A673 (cell line): ENCODE measurements at regions of chr7 and their contacts with region 1.

Region 1: DNA sequence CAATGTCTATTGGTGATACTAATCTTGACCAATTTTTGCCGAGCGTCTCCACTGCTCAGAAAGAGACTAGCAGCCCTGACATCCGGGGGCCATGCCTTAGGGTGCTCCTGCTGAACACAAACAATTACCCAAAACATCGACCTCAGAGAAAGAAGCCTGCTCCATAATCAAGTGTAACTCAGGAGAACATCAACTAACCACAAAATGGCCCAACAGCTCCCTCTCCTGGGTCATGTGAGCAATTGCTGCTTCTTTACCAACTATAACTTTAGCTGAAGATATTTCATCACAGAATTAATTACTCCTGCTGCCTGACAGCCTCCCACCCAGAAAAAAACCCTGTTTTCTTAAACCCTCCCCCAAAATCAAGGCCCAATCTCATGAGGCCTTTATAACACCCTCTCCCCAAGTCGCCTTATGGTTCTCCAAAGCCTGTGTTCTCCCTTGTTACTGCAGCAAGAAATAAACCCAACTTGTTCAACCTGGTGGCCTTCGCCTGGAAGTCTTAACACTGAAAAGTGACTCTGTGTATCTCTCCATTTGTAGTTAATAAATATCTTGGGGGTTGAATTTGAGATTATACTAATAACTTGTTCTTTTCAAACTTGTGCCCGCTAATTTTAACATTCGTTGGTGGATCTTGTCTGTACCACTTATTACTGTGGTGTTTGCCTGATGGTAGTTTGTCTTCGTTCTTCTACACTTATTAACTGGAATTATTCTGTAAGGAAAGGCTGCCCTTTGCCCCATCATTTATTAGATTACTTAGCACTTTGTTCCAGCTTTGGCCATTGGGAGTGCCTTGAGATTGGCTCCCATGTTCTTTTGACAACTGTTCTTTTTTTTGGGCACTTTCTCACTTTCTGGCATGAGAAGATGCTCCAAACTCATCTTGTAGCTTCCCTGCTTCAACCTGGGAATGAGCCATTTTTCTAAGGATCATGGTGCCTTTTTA is 21.2 kb upstream of the RAMP3 start:
- DNase-seq: peak; percentile 86
- H3K4me3 ChIP-seq: no peak overlapping the region
- H3K27ac ChIP-seq: no peak overlapping the region
- H3K4me1 ChIP-seq: no peaks in the 10 kb centered on the region
- H3K27me3 ChIP-seq: no peaks in the 10 kb centered on the region
- CTCF ChIP-seq: peak; percentile 90

Region 2: DNA sequence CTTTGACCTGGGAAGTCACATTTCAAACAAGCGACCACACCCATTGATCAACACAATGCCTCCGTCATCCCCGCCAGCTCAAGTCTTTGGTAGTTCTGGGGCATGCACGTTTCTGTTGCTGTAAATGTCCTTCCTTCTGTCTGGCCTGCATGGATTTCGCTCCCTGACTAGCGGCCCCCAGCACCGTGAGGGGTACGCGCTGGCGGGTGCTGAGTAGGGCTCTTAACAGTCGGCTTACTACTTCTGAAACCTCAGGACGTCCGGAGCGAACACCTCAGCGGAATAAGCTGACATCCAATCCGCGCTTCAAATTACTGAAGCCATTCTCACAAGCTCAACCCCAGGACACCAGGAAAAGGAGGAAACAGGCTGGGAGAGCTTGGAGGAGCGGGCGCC is 646.4 kb before region 1 on chr7:
- CTCF ChIA-PET with region 1: no interaction called
- POLR2A ChIA-PET with region 1: no interaction called
- intact Hi-C with region 1: loop called (anchors 10 kb)
- DNase-seq: no peak
- H3K4me3 ChIP-seq: peak overlapping the region; percentile 81
- H3K27ac ChIP-seq: peak overlapping the region; percentile 99
- H3K4me1 ChIP-seq: no peaks in the 10 kb centered on the region
- H3K27me3 ChIP-seq: no peaks in the 10 kb centered on the region
- CTCF ChIP-seq: no peak

Region 3: GRCh38 chr7:44713680-44714335 is 422.6 kb before region 1 on chr7:
- CTCF ChIA-PET with region 1: interaction called, 11 read pairs
- POLR2A ChIA-PET with region 1: no interaction called
- intact Hi-C with region 1: no loop called
- DNase-seq: no peak
- H3K4me3 ChIP-seq: no peak overlapping the region
- H3K27ac ChIP-seq: no peak overlapping the region
- H3K4me1 ChIP-seq: no peaks in the 10 kb centered on the region
- H3K27me3 ChIP-seq: no peaks in the 10 kb centered on the region
- CTCF ChIP-seq: no peak

Region 4: DNA sequence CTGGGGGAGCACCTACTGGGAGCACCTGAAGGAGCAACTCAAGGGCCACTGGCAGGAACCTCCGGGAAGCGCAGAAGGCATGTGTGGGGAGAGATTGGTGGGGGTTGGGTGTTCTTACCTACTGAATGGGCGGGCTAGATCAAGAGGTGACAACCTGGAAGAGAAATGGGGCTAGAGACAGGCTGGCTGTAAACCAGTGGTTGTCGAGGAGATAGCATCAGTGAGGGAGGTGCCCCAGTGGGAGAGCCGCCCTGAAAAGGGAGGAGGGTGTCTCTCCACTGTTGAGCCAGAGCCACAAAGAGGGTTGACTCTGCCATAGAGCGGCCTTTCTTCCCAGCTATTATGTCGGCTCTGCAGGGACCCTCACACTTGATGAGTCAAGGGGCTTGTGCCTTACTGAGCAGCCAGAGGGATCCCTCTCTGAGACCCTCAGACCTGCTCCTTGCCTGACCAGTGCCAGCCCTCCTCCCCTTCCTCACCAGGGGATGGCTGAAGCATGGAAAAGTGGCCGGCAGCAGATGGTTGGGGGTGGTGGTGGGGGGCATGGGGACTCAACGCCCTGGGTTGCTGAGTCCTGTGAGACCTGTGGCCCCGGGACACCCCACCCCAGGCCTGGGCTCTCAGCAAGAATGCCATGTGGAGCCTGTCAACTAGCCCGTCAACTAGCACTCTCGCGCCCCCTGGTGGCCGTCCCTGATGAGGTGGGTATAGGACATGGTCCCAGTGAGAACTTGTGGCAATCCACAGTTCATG is 214.6 kb before region 1 on chr7:
- CTCF ChIA-PET with region 1: no interaction called
- POLR2A ChIA-PET with region 1: no interaction called
- intact Hi-C with region 1: loop called (anchors 2 kb)
- DNase-seq: peak; percentile 83
- H3K4me3 ChIP-seq: no peak overlapping the region
- H3K27ac ChIP-seq: no peak overlapping the region
- H3K4me1 ChIP-seq: no peaks in the 10 kb centered on the region
- H3K27me3 ChIP-seq: no peaks in the 10 kb centered on the region
- CTCF ChIP-seq: peak; percentile 90

Region 5: DNA sequence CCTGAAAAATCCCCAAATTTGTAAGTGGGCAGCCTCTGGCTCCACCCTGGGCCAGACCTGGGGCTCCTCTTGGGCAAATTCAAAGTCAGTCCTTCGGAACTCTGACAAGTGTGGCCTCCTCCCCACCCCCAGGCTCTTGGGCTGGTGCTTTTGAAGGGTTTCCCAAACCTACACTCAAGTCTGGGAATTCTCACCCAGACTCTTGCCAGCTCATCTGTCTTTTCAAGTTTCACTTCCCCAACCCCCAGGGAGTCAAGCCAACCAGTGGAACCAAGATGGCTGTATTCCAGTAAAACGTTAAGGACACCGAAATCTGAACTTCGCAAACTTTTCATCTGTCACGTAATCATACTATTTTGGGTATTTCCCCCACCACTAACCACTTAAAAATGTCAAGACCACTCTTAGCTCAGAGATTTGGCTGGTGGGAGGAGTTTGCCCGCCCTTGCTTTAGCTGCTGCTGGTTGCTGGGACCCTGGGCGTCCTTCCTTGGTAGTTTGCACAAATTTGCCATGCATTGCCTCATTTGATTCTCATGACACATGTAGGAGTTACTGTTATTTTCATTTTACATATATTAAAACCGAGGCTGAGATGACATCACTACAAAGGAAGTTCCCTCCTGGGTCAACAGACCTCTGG is 155.9 kb before region 1 on chr7:
- CTCF ChIA-PET with region 1: no interaction called
- POLR2A ChIA-PET with region 1: no interaction called
- intact Hi-C with region 1: loop called (anchors 5 kb)
- DNase-seq: peak; percentile 69
- H3K4me3 ChIP-seq: no peak overlapping the region
- H3K27ac ChIP-seq: peak overlapping the region; percentile 80
- H3K4me1 ChIP-seq: peaks cover 42% of the 10 kb centered on the region
- H3K27me3 ChIP-seq: no peaks in the 10 kb centered on the region
- CTCF ChIP-seq: no peak

Region 6: DNA sequence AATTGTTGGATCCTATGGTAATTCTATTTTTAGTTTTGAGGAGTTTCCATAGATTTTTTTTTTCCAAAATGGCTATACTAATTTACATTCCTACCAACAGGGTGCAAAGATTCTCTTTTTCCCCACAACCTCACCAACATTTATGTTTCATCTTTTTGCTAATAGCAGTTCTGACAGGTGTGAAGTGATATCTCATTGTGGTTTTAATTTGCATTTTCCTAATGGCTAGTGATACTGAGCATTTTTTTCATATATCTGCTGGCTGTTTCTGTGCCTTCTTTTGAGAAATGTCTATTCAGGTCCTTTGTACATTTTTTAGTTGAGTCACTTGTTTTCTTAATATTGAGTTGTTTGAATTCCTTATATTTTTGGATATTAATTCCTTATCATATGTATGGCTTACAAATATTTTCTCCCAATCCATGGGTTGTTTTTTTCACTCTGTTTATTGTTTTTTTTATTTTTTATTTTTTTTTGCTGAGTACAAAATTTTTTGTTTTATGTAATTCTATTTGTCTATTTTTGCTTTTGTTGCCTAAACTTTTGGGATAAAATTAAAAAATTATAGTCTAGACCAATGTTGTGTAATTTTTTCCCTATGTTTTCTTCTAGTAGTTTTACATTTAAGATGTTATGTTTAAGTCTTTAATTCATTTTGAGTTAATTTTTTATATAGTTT is 231.9 kb after region 1 on chr7:
- CTCF ChIA-PET with region 1: no interaction called
- POLR2A ChIA-PET with region 1: no interaction called
- intact Hi-C with region 1: no loop called
- DNase-seq: no peak
- H3K4me3 ChIP-seq: no peak overlapping the region
- H3K27ac ChIP-seq: no peak overlapping the region
- H3K4me1 ChIP-seq: no peaks in the 10 kb centered on the region
- H3K27me3 ChIP-seq: peaks cover 49% of the 10 kb centered on the region
- CTCF ChIP-seq: no peak